Activated B cell treated with CpG ODN at 0.5 μM for 24 hours (primary cell): ENCODE measurements at regions of chr12 and their contacts with region 1.

Region 1: DNA sequence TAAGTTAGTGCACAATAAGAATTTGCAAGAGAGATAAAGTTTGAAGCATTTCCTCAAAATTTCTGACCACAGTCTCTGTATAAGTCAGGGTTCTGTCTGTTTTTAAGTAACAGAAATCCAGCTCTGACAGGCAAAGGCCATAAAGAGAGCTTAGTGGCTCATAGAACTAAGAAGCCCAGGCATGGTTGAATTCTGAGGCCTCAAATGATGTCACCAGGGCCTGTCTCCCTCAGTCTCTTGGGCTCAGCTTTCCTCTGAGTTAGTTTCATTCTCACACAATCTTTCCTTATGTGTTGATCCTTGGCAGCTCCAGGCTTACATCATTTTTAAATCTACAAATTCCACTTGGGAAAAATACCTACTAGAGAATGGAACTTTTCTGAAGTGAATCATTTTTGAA is 173.4 kb upstream of the ATP2B1 start:
- DNase-seq: no peak
- ATAC-seq: peak; percentile 52
- H3K4me3 Mint-ChIP-seq: peak overlapping the region; percentile 76
- H3K27ac Mint-ChIP-seq: peak overlapping the region; percentile 97
- H3K4me1 Mint-ChIP-seq: peaks cover 62% of the 10 kb centered on the region
- H3K27me3 Mint-ChIP-seq: no peaks in the 10 kb centered on the region
- CTCF ChIP-seq: no peak

Region 2: GRCh38 chr12:89756585-89757321 is 125.3 kb before region 1 on chr12:
- CTCF ChIA-PET with region 1: no interaction called
- POLR2A ChIA-PET with region 1: interaction called, 5 read pairs
- intact Hi-C with region 1: loop called (anchors 1 kb)
- DNase-seq: no peak
- ATAC-seq: peak; percentile 74
- H3K4me3 Mint-ChIP-seq: peak overlapping the region; percentile 25
- H3K27ac Mint-ChIP-seq: peak overlapping the region; percentile 96
- H3K4me1 Mint-ChIP-seq: peaks cover 62% of the 10 kb centered on the region
- H3K27me3 Mint-ChIP-seq: no peaks in the 10 kb centered on the region
- CTCF ChIP-seq: no peak

Region 3: DNA sequence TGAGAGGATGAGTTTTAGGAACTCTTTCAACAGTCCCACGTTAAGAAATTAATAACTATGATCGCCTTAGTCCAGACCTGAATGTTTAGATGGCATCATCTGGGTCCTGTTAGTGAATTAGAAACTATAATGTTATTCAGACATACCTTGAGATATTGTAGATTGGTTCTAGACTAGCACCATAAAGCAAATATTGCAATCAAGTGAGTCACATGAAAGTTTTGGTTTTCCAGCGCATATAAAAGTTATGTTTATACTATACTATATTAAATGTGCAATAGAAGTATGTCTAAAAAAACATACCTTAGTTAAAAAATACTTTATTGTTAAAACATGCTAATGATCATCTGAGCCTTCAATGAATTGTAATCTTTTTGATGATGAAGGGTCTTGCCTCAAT is 66.8 kb before region 1 on chr12:
- CTCF ChIA-PET with region 1: no interaction called
- POLR2A ChIA-PET with region 1: no interaction called
- intact Hi-C with region 1: no loop called
- DNase-seq: no peak
- ATAC-seq: no peak
- H3K4me3 Mint-ChIP-seq: no peak overlapping the region
- H3K27ac Mint-ChIP-seq: no peak overlapping the region
- H3K4me1 Mint-ChIP-seq: peaks cover 10% of the 10 kb centered on the region
- H3K27me3 Mint-ChIP-seq: no peaks in the 10 kb centered on the region
- CTCF ChIP-seq: no peak

Region 4: DNA sequence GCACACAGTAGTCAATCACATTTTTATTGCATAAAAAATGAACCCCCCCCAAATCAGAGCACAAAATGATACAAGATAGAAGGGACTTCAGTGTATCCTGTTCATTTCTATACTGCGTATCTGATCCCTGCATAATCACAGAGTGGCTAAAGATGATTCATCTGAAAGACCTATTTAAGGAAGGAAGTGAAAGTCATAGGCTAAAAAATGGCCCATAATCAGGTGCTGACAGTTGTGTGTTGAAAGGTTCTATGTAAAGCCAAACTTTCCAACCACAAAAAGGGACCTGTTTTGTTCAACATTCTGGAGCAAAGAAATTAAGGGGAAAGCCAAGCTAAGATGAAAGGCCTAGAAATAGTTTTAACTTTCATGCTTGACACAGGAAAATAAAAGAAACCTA is 25.6 kb before region 1 on chr12:
- CTCF ChIA-PET with region 1: no interaction called
- POLR2A ChIA-PET with region 1: interaction called, 11 read pairs
- intact Hi-C with region 1: loop called (anchors 1 kb)
- DNase-seq: no peak
- ATAC-seq: peak; percentile 86
- H3K4me3 Mint-ChIP-seq: peak overlapping the region; percentile 68
- H3K27ac Mint-ChIP-seq: peak overlapping the region; percentile 91
- H3K4me1 Mint-ChIP-seq: peaks cover 64% of the 10 kb centered on the region
- H3K27me3 Mint-ChIP-seq: no peaks in the 10 kb centered on the region
- CTCF ChIP-seq: no peak

Region 5: DNA sequence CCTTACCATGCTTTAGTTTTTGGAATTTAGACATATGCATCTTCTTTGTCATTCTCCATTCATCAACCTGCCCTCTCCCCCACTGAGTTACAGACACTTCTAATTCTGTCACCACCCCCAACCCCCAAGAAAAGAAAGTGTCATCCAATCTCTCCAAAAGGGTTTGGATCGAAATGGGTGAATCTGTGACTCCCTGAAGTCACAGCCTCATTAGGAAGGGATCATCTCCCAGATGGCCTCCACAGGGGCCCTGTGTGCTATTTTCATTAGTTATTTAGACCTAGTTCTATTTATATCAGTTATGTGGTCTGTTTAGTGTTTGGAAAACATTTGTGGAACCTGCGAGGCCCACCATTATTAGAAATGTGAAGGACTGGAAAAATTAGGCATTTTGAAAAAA is 17.6 kb after region 1 on chr12:
- CTCF ChIA-PET with region 1: interaction called, 3 read pairs
- POLR2A ChIA-PET with region 1: interaction called, 8 read pairs
- intact Hi-C with region 1: loop called (anchors 2 kb)
- DNase-seq: no peak
- ATAC-seq: no peak
- H3K4me3 Mint-ChIP-seq: no peak overlapping the region
- H3K27ac Mint-ChIP-seq: no peak overlapping the region
- H3K4me1 Mint-ChIP-seq: peaks cover 22% of the 10 kb centered on the region
- H3K27me3 Mint-ChIP-seq: no peaks in the 10 kb centered on the region
- CTCF ChIP-seq: no peak

Region 6: DNA sequence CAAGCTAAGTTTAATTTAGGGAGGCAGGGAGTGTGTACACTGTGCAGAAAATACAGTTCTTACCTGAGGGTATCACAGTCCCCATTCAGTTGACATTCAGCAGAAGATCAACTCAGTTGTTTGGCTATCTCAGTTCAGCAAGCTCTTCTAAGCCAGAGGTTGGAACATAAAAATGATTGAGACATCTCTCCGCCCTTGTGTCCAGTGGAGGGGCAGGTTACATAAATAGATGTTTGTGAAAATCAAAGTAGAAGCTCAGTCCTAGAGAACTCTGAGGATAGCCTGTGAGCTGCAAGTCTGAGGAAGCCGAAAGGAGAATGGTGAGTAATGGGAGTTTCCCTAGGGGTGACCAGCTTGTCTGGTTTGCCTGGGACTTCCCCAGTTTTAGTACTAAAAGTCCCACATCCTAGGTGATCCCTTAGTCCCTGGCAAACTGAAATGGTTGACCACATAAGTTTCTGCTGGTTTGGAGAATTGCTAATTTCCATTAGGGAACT is 78.0 kb after region 1 on chr12:
- CTCF ChIA-PET with region 1: interaction called, 3 read pairs
- POLR2A ChIA-PET with region 1: interaction called, 15 read pairs
- intact Hi-C with region 1: loop called (anchors 1 kb)
- DNase-seq: no peak
- ATAC-seq: peak; percentile 92
- H3K4me3 Mint-ChIP-seq: peak overlapping the region; percentile 74
- H3K27ac Mint-ChIP-seq: peak overlapping the region; percentile 85
- H3K4me1 Mint-ChIP-seq: peaks cover 38% of the 10 kb centered on the region
- H3K27me3 Mint-ChIP-seq: no peaks in the 10 kb centered on the region
- CTCF ChIP-seq: no peak

Region 7: GRCh38 chr12:90102957-90103652 is 221.1 kb after region 1 on chr12:
- CTCF ChIA-PET with region 1: interaction called, 3 read pairs
- POLR2A ChIA-PET with region 1: no interaction called
- intact Hi-C with region 1: loop called (anchors 10 kb)
- DNase-seq: no peak
- ATAC-seq: peak; percentile 75
- H3K4me3 Mint-ChIP-seq: peak overlapping the region; percentile 66
- H3K27ac Mint-ChIP-seq: peak overlapping the region; percentile 43
- H3K4me1 Mint-ChIP-seq: peaks cover 29% of the 10 kb centered on the region
- H3K27me3 Mint-ChIP-seq: no peaks in the 10 kb centered on the region
- CTCF ChIP-seq: no peak